Activated T-helper 2 cell treated with anti-CD3 and anti-CD28 coated beads, Interferon-gamma antibody, Interleukin-2, Interleukin-4, amounts not matched to agents 10 μg/mL and 5 μg/mL and 100 μg/mL, durations not matched to agents 14 hours and 24 hours and 36 hours (primary cell): ENCODE measurements at regions of chr18 and their contacts with region 1.

Region 1: DNA sequence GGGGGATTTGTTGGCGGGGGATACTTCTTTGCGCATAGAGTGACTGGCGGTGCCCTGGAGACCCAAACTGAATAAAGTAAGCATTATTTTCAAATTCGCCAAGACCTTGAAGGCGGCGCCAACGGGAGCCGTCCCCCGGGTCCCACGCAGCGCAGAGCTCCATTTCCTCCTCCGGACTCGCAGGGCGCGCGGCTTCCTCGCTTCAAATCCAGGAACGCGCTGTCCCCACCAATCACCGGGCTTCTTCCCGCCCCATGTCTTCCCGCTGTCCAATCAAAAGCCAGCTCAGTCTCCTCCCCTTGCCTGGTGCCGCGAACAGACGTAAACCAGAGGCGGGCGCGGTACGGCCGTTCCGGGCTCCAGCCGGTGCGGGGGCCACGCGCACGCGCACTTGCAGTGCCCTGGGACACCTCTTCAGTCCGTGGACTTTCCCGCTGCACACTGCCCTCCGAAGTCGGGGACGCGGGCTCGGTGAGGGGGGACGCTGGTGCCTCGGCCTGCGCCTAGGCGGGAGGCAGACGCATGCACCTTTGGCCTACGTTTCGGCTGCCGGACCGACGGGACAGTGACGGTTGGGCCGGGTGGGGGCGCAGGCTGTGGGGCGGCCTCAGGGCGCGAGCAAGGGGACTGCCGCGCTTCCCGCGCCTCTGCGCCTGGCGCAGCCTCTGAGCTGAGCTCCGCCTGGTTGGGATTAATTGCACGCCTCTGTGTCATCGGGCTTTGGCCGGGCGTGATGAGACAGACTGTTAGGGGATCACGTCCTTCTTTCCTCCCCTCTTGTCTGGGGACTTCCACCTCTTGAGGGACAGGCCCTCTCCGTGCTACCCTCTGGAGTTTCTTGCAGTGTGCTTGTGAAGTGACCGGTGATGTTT is at the start of gene CEP192:
- DNase-seq: peak; percentile 98
- H3K4me3 Mint-ChIP-seq: peak within 1 kb of the TSS; percentile 97
- H3K27ac Mint-ChIP-seq: peak within 1 kb of the TSS; percentile 98
- H3K4me1 Mint-ChIP-seq: peaks cover 31% of the 10 kb centered on the region
- H3K27me3 Mint-ChIP-seq: no peaks in the 10 kb centered on the region
- total RNA-seq, gene CEP192: 37.2 and 37.4 TPM in 2 replicates

Region 2: DNA sequence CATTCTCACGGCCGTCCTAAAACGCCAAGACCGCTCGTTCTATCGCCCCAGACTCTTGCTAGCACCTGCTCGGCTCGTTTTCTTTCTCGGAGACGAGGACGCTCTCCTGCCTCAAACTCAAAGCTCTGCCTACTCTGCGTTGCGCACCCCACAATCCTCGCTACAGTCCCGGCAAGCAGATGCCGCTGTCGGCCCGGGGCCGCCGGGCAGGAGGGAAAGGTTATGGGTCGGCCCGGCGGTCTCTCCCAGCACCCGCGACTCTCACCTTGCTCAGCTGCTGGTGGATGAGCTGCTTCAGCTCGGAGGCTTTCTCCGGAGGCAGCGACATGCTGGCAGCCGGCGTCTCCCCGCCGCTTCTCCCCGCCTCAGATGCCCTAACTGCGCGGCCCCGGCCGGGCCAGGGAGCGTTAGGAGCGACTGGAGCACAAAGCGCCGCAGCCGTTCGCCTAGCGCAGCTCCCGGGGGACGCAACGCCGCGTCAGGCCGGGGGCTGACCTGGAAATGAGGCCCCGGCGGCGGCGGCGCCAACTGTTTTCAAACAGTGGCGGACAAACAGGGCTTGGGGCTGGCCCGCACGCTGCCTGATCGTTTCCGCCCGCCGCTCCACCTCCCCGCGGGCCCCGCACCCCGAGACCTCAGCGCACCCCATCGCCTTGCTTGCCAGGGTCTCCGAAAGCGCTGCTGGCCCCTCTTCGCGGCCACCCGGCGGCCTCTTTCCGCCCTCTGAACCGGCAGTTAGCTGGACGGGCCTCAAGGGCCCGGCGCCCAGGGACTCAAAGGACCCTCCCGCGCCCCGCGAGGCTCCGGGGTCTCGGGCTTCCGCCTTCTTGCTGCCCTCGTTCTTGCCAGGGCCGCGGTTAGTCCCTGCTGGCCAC is 288.7 kb before region 1 on chr18 and contains the starts of genes CEP76 and PSMG2:
- intact Hi-C with region 1: loop called (anchors 2 kb)
- DNase-seq: peak; percentile 81
- H3K4me3 Mint-ChIP-seq: peak within 1 kb of the TSS; percentile 100
- H3K27ac Mint-ChIP-seq: peak within 1 kb of the TSS; percentile 99
- H3K4me1 Mint-ChIP-seq: peaks cover 31% of the 10 kb centered on the region
- H3K27me3 Mint-ChIP-seq: no peaks in the 10 kb centered on the region
- total RNA-seq, gene CEP76: 14.5 and 17.6 TPM in 2 replicates
- total RNA-seq, gene PSMG2: 105 and 107 TPM in 2 replicates

Region 3: DNA sequence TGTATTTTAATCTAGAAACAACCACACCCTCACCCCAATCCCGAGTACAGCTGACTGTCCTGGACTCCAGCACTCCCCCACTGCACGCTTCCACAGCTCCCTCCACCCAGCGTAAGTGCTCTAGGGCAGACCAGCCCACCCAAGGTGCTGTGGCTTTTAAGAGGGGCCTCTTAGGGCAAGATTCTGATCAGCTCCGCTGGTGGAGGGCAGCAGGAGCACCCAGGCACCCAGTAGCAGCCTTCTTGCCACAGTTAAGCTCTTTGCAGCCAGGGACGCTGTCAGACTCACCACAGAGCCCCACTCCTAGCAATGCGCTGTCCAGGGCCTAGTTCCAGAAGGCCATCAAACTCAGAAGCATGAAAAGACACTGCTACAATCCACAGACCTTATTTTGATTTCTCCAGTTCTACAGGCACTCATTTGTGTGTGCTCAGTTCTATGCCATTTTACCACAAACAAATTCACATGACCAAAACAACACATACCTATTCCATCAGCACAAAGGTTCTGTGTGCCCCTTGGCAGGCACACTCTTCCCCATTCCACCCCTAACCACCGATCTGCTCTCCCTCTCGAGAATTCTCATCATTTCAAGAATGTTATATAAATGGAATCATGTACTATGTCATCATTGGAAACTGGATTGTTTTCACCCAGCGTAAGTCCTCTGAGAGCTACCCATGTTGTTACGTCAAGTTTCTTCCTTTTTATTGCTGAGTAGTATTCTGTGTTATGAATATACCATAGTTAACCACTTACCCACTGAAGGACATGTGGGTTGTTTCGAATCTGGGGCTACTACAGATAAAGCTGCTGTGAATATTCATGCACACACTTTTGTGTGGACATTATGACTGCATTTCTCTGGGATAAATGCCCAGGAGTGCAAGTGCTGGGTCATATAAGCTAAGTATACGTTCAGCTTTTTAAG is 147.5 kb before region 1 on chr18:
- intact Hi-C with region 1: no loop called
- DNase-seq: no peak
- H3K4me3 Mint-ChIP-seq: no peak overlapping the region
- H3K27ac Mint-ChIP-seq: peak overlapping the region; percentile 65
- H3K4me1 Mint-ChIP-seq: peaks cover 77% of the 10 kb centered on the region
- H3K27me3 Mint-ChIP-seq: no peaks in the 10 kb centered on the region

Region 4: GRCh38 chr18:12921178-12921577 is 70.0 kb before region 1 on chr18:
- intact Hi-C with region 1: no loop called
- DNase-seq: no peak
- H3K4me3 Mint-ChIP-seq: no peak overlapping the region
- H3K27ac Mint-ChIP-seq: no peak overlapping the region
- H3K4me1 Mint-ChIP-seq: peaks cover 10% of the 10 kb centered on the region
- H3K27me3 Mint-ChIP-seq: peaks cover 9% of the 10 kb centered on the region

Region 5: GRCh38 chr18:12947355-12948041 is 43.7 kb before region 1 on chr18 and contains the start of gene SEH1L:
- intact Hi-C with region 1: loop called (anchors 1 kb)
- DNase-seq: peak; percentile 96
- H3K4me3 Mint-ChIP-seq: peak within 1 kb of the TSS; percentile 98
- H3K27ac Mint-ChIP-seq: peak within 1 kb of the TSS; percentile 99
- H3K4me1 Mint-ChIP-seq: peaks cover 29% of the 10 kb centered on the region
- H3K27me3 Mint-ChIP-seq: no peaks in the 10 kb centered on the region
- total RNA-seq, gene SEH1L: 112 and 115 TPM in 2 replicates

Region 6: GRCh38 chr18:13051950-13052349 is 60.7 kb after region 1 on chr18:
- intact Hi-C with region 1: loop called (anchors 5 kb)
- DNase-seq: no peak
- H3K4me3 Mint-ChIP-seq: no peak overlapping the region
- H3K27ac Mint-ChIP-seq: peak overlapping the region; percentile 52
- H3K4me1 Mint-ChIP-seq: peaks cover 10% of the 10 kb centered on the region
- H3K27me3 Mint-ChIP-seq: no peaks in the 10 kb centered on the region